ENCODE measurements at regions of chr4 and their contacts with region 1.

Region 1: DNA sequence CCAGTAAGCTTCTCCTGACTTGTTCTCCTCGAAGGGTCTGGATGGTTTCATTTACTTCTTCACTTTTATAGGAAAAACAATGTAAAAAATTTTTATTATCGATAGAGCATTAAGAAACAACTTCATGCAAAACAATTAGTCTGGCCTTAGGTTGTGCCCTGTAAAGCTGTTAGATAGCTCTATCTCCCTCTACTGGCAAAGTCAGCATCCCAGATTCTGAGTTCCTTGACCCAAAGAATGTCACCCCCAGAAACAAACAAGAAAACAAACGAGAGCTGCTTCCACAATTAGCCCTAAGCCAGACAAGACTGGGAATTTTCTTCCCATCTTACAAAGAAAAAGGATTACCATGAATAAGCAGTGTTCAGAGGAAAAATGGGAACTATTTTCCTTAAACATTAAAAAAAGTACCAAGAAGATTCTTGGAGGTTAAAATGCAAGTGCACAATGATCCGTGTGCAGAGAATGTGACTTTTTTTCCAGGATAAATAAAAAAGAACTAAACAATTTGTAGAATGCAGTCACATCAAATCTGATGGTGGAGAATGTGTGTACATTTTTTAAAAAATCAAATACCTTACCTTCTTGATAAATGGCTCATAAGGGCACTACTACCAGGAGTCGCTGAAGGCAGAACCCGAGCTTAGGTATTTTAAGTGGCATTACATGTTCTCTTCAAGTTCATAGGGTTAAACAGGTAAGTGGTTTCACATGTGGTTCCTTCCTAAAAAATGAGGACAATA is 293.2 kb downstream of the FBXO8 start:
- DNase-seq: no peak
- ATAC-seq: peak; percentile 81

Region 2: GRCh38 chr4:174120446-174121295 is 130.4 kb after region 1 on chr4:
- intact Hi-C with region 1: loop called (anchors 5 kb)
- DNase-seq: peak; percentile 84
- ATAC-seq: peak; percentile 82

Region 3: DNA sequence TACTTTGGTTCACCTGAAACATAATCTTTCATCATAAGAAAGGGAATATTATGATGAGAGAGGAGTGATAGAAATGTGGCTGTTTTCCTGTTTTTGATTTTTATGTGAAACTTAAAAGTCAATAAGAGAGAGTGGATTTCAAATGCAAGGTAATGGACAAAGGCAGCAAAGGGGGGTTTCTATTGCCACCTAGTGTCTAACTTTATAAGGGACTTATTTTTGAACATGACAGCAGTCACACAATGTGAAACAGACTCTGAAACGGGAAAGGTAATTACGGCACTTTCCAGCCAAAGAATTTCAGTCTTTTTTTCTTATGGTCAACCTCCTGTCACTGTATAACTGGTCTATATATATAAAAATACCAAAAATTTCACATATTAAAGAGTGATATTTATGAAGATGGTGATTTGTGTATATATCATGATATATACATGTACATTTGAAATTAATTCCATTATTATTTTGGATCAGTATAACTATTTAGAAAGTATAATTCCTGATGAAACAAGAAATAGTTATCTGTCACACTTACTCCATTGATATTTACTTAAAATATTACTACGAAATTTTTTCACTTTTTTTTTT is 166.0 kb after region 1 on chr4:
- intact Hi-C with region 1: loop called (anchors 10 kb)
- DNase-seq: no peak
- ATAC-seq: peak; percentile 73

Measured in Right ventricle myocardium inferior (tissue), 1 donor.